Activated CD4-positive, alpha-beta memory T cell treated with anti-CD3 and anti-CD28 coated beads for 36 hours (primary cell): ENCODE measurements at regions of chr14 and their contacts with region 1.

Region 1: DNA sequence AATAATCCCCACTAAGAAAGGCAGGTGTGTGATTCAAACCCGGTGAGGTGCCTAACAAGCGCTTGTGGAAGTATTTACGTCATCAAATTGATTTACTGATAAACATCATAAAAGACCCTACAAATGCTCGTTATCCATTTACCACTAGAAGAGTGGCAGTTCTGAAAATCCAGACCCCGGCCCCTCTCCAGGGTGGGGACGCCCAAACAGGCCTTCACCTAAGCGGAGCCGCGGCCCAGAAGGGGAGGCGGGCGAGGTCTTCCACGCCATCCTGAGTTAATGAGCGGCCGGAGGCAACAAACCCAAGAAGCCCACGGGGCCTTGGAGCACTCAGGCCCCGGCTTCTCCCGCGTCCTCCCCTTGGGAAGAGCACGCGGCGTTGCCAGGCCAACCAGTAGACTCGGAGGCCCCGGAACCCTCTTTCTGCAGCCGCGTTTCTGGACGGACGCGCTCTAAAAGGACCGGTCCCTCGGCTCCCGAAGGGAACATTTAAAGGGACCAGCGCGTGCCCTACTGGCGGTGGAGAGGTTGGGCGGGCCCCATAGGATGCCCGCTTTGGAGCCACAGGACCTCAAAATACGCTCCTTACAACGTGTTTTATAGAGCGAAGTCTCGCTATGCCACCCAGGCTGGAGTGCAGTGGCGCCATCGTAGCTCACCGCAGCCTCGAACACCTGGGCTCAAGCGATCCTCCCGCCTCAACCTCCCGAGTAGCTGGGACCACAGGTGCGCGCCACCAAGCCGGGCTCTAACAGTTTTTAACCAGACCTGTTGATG is 3.5 kb downstream of the PTPN21 start:
- DNase-seq: peak; percentile 69
- H3K4me3 Mint-ChIP-seq: peak overlapping the region; percentile 62
- H3K27ac Mint-ChIP-seq: no peak overlapping the region
- H3K4me1 Mint-ChIP-seq: peaks cover 10% of the 10 kb centered on the region
- H3K27me3 Mint-ChIP-seq: peaks cover 34% of the 10 kb centered on the region

Region 2: DNA sequence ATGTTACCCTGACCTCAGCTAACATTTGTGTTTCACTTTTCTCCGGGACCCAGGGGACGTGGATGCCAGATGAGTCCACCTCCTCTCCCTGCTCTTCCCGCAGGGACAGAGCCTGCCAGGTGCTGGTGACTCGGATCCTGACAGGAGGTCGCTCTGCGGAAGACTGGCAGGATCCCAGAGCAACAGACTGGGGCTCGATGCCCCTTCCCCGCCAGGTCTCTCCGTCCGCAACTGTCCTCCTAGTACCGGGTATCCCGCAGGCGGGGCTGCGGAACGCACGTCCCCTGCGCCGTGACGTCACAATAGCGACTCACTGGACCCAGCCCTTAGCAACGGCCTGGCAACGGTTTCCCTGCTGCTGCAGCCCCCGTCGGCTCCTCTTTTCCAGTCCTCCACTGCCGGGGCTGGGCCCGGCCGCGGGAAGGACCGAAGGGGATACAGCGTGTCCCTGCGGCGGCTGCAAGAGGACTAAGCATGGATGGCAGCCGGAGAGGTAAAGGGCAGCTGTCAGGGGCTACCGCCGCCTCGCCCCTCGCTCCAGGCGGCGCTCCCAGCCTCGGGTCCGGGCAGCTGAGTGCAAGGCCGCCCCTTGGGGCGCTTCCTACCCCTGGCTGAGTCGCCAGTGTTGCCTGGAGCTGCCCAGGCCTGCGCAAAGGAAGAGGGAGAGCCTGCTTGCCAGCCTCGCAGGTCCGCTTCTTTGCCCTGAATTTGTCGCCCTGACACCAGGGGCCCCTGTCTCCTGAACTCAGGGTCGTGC is 165.8 kb before region 1 on chr14 and contains the start of gene SPATA7:
- CTCF ChIA-PET with region 1: no interaction called
- POLR2A ChIA-PET with region 1: no interaction called
- intact Hi-C with region 1: loop called (anchors 10 kb)
- DNase-seq: peak; percentile 90
- H3K4me3 Mint-ChIP-seq: peak within 1 kb of the TSS; percentile 95
- H3K27ac Mint-ChIP-seq: peak within 1 kb of the TSS; percentile 76
- H3K4me1 Mint-ChIP-seq: peaks cover 14% of the 10 kb centered on the region
- H3K27me3 Mint-ChIP-seq: no peaks in the 10 kb centered on the region
- total RNA-seq, gene SPATA7: 4.2 to 4.5 TPM

Region 3: DNA sequence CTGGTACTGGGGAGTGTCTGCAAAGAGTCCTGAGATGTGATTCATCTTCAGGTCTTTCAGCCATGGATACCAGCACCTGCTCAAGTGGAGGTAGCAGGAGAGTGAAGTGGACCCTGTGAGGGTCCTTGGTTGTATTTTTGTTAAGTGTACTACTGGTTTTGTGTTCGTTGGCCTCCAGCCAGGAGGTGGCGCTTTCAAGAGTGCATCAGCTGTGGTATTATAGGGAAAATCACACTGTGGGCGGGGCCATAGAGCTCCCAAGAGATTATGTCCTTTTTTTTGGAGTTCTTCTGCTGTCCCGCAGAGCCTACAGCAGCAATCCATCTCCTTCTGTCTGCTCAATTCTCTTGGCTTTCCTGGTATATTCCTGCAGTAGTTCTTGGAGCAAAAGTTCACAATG is 99.1 kb before region 1 on chr14:
- CTCF ChIA-PET with region 1: no interaction called
- POLR2A ChIA-PET with region 1: no interaction called
- intact Hi-C with region 1: no loop called
- DNase-seq: no peak
- H3K4me3 Mint-ChIP-seq: no peak overlapping the region
- H3K27ac Mint-ChIP-seq: no peak overlapping the region
- H3K4me1 Mint-ChIP-seq: no peaks in the 10 kb centered on the region
- H3K27me3 Mint-ChIP-seq: no peaks in the 10 kb centered on the region

Region 4: DNA sequence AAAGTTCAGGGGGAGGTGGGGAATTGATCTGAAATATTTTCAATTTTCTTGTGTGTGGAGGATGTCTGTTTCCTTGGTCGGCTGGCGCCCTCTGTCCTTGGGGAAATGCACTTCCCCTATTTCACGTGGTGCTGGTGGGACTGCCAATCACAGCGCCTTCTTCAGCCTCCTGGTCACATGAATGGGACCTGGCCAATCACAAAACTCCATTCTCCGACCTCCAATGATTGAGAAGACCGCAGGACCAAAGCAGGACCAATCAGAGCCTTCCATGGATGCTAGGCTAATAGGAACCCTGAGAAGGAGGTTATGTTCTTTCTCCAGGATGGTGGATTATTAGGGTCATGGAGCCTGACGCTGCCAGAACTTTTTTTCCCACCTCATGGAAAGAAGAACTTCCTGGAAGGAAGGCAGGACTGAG is 461.8 kb after region 1 on chr14:
- CTCF ChIA-PET with region 1: no interaction called
- POLR2A ChIA-PET with region 1: no interaction called
- intact Hi-C with region 1: loop called (anchors 5 kb)
- DNase-seq: peak; percentile 48
- H3K4me3 Mint-ChIP-seq: no peak overlapping the region
- H3K27ac Mint-ChIP-seq: no peak overlapping the region
- H3K4me1 Mint-ChIP-seq: no peaks in the 10 kb centered on the region
- H3K27me3 Mint-ChIP-seq: peaks cover 12% of the 10 kb centered on the region